ENCODE measurements at regions of chr16 and their contacts with region 1.

Region 1: DNA sequence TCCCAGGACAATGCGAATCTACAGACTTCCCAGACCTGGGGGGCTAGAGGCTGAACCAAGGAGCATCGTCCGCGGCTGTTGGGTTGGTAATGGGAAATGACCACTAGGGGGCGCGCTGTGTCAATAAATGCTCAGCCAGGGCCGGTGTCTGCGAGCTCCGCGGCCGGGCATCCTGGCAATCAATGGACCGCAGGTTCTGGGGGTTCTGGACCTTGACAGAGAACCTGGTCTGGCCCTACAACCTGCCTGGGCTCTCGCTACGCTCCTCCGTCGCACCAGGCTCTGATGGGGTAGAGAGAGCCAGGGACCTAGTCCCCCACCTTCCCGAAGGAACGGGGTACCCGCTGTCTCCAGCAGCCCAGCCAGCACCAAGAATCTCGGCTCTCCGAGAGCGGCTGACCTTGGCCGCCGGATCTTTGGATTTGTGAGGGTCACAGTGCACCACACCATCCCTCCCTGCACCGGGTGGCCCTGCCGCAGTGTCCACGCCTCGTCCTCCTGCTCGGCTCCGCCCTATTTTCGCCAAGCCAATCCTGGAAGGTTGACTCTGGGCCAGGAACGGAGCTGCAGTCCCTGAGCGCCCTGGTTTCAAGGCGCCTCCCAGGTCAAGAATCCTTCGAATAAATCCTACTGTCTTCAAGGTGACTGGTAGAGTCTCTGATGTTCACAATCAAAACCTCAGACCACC is 20.4 kb upstream of the BEAN1 start:
- DNase-seq: peak; percentile 91
- ATAC-seq: peak; percentile 93
- H3K4me3 Mint-ChIP-seq: peak overlapping the region; percentile 78
- H3K27ac Mint-ChIP-seq: peak overlapping the region; percentile 8
- H3K4me1 Mint-ChIP-seq: peaks cover 23% of the 10 kb centered on the region
- H3K27me3 Mint-ChIP-seq: peaks cover 14% of the 10 kb centered on the region

Region 2: GRCh38 chr16:66483689-66484481 is 77.2 kb after region 1 on chr16:
- CTCF ChIA-PET with region 1: interaction called, 209 read pairs
- DNase-seq: peak; percentile 86
- ATAC-seq: peak; percentile 85
- H3K4me3 Mint-ChIP-seq: no peak overlapping the region
- H3K27ac Mint-ChIP-seq: no peak overlapping the region
- H3K4me1 Mint-ChIP-seq: peaks cover 29% of the 10 kb centered on the region
- H3K27me3 Mint-ChIP-seq: no peaks in the 10 kb centered on the region

Region 3: DNA sequence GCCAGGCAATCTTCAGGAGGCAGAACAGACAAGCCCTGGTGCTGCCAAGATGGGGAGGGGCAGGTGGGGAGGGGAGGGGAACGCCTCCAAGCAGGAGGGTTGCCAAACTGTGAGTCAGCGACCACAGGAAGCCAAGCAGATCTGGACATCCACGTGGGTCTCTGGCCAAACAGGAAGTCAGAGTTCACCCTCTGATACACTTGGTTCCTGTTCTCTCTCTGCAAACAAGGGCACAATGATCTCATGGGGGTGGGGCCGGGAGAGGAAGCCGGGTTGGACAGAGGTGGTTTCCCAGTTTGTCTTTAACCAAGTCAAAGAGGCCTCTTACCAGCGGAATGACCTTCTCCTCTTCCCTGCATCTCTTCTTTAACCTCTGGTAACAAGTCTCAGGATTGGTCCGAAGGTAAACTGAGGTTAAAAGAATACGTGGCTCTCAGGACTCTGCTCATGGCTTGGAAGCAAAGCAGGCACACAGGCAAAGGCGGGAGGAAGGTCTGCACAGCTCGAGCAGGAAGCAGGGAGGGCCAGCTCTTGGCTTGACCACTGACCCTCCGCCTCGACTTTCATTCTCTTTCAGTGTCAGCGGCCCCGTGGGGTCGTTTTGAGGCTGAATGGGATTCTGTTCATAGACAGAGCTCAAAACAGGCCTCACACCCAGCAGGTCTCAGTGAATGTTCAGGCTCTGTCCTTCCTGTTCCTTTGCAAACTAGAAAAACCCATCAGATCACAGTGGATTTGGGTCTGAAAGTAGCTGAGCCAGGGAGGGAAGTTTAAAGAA is 110.3 kb after region 1 on chr16:
- CTCF ChIA-PET with region 1: interaction called, 35 read pairs
- DNase-seq: peak; percentile 96
- ATAC-seq: peak; percentile 88
- H3K4me3 Mint-ChIP-seq: peak overlapping the region; percentile 83
- H3K27ac Mint-ChIP-seq: peak overlapping the region; percentile 99
- H3K4me1 Mint-ChIP-seq: peaks cover 66% of the 10 kb centered on the region
- H3K27me3 Mint-ChIP-seq: no peaks in the 10 kb centered on the region

Region 4: GRCh38 chr16:66608241-66609138 is 201.8 kb after region 1 on chr16:
- CTCF ChIA-PET with region 1: interaction called, 11 read pairs
- DNase-seq: peak; percentile 86
- ATAC-seq: peak; percentile 17
- H3K4me3 Mint-ChIP-seq: no peak overlapping the region
- H3K27ac Mint-ChIP-seq: peak overlapping the region; percentile 59
- H3K4me1 Mint-ChIP-seq: peaks cover 46% of the 10 kb centered on the region
- H3K27me3 Mint-ChIP-seq: no peaks in the 10 kb centered on the region

Region 5: GRCh38 chr16:66751303-66751991 is 344.8 kb after region 1 on chr16 and contains the start of gene DYNC1LI2:
- CTCF ChIA-PET with region 1: interaction called, 10 read pairs
- DNase-seq: peak; percentile 86
- ATAC-seq: peak; percentile 87
- H3K4me3 Mint-ChIP-seq: peak within 1 kb of the TSS; percentile 85
- H3K27ac Mint-ChIP-seq: peak within 1 kb of the TSS; percentile 86
- H3K4me1 Mint-ChIP-seq: peaks cover 46% of the 10 kb centered on the region
- H3K27me3 Mint-ChIP-seq: peaks cover 24% of the 10 kb centered on the region
- total RNA-seq, gene DYNC1LI2: 71.6 to 81.0 TPM

Measured in activated CD8-positive, alpha-beta memory T cell treated with anti-CD3 and anti-CD28 coated beads, Interleukin-2, amount 10 ng/mL, durations not matched to agents 7 days and 5 days (primary cell).